Mammary epithelial cell (primary cell): ENCODE measurements at regions of chr1 and their contacts with region 1.

Region 1: GRCh38 chr1:158013840-158014730 is 20.6 kb downstream of the KIRREL1 start:
- DNase-seq: no peak
- H3K4me3 ChIP-seq: no peak overlapping the region
- H3K27ac ChIP-seq: peak overlapping the region; percentile 14
- H3K4me1 ChIP-seq: peaks cover 93% of the 10 kb centered on the region
- H3K27me3 ChIP-seq: no peaks in the 10 kb centered on the region
- CTCF ChIP-seq: no peak

Region 2: GRCh38 chr1:158002022-158002630 is 12.0 kb before region 1 on chr1:
- CTCF ChIA-PET with region 1: no interaction called
- dilution Hi-C with region 1: no loop called
- in situ Hi-C with region 1: no loop called
- intact Hi-C with region 1: loop called (anchors 1 kb)
- DNase-seq: peak; percentile 23
- H3K4me3 ChIP-seq: no peak overlapping the region
- H3K27ac ChIP-seq: peak overlapping the region; percentile 42
- H3K4me1 ChIP-seq: peaks cover 78% of the 10 kb centered on the region
- H3K27me3 ChIP-seq: no peaks in the 10 kb centered on the region
- CTCF ChIP-seq: no peak

Region 3: GRCh38 chr1:159066108-159066507 is 1052.0 kb after region 1 on chr1:
- CTCF ChIA-PET with region 1: no interaction called
- dilution Hi-C with region 1: no loop called
- in situ Hi-C with region 1: no loop called
- intact Hi-C with region 1: no loop called
- DNase-seq: no peak
- H3K4me3 ChIP-seq: no peak overlapping the region
- H3K27ac ChIP-seq: no peak overlapping the region
- H3K4me1 ChIP-seq: no peaks in the 10 kb centered on the region
- H3K27me3 ChIP-seq: no peaks in the 10 kb centered on the region
- CTCF ChIP-seq: no peak